ENCODE measurements at regions of chr2 and their contacts with region 1.

Region 1: GRCh38 chr2:9984217-9984739 is 32.8 kb downstream of the GRHL1 start:
- DNase-seq: peak; percentile 78
- ATAC-seq: peak; percentile 43; the same call in 1 of the 2 replicates
- H3K4me3 ChIP-seq: no peak overlapping the region
- H3K27ac ChIP-seq: no peak overlapping the region
- H3K4me1 ChIP-seq: 0 out of 2 replicates have a peak, but pooled peaks cover 3% of the 10 kb centered on the region
- H3K27me3 ChIP-seq: no peaks in the 10 kb centered on the region
- CTCF ChIP-seq: peak; percentile 79

Region 2: DNA sequence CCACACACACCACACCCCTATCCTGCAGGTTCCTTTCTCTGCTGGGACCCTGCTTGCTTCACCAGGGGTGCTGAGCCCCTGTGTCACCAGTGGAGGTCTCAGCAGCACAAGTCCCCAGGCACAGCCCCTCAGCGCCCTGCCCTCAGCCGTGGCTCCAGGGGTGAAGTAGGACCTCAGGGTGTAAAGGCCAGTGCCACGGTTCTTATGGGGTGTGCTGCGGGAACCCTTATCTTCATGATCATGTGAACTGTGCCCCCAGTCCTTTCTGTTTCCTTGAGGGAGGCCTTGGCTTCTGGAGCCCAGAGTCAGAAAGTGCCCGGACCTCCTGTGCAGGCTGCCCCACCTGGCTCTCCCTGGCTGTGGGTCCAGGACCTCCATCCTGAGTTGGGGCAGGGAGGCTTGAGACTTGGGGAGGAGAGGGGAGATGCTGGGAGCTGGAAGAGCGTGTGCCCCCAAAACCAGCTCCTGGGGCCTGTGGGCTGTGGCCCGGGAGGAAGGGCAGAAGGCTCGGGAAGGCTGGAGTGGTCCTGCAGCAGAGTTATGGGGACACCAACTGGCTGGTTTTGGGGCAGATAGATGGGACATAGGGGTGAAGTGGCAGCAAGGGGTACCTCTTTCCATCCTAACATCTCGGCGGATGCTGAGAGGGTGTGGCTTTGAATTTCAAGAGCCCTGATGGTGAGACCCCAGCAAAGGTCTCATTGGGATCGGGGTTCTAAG is 38.8 kb after region 1 on chr2:
- CTCF ChIA-PET with region 1: interaction called, 11 read pairs
- POLR2A ChIA-PET with region 1: no interaction called
- intact Hi-C with region 1: loop called (anchors 2 kb)
- DNase-seq: no peak
- ATAC-seq: peak; percentile 40; the same call in 1 of the 2 replicates
- H3K4me3 ChIP-seq: no peak overlapping the region
- H3K27ac ChIP-seq: no peak overlapping the region
- H3K4me1 ChIP-seq: no peaks in the 10 kb centered on the region
- H3K27me3 ChIP-seq: no peaks in the 10 kb centered on the region
- CTCF ChIP-seq: no peak

Region 3: DNA sequence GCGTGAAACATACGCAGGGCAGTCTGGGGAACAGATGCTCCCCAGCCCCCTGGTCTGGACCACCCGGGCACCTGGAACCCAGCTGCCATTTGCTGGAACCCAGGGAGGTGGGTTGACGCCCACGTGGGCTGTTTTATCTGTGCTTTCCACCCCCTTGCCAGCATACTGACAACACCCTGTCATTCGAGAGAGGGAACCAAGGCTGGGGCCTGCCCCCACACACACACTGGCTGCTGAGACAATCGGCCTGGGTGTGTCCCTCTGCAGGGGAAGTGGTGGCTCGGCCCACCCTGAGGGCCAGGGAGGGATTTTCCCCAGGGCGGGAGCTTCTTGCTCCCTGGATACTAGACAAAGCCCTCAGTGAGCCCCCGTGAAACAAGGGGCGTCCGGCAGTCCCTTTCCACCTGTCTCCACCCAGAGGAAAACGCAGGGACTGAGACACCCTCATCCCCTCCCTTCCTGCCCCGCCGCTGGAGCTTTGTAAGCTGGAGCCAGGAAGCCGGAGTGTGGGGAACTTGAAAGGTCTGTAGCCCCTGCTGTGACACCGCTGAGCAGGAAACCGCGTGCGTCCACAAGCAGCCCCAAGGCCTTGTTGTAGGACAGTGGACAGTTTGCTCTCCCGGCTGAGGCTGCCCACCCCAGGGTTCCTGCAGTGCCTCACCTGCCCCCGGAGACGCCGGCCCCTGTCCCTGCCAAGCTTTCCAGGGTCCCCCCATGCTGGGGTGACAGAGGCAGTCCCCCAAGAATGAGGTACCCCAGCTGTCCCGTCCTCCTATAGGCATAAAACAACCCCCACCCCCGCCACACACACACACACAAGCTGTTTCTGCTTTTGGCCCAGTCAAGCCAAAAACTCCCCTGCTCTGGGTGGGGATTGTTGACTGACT is 45.0 kb after region 1 on chr2:
- CTCF ChIA-PET with region 1: interaction called, 6 read pairs
- POLR2A ChIA-PET with region 1: no interaction called
- intact Hi-C with region 1: loop called (anchors 2 kb)
- DNase-seq: no peak
- ATAC-seq: no peak; the same call in 1 of the 2 replicates
- H3K4me3 ChIP-seq: no peak overlapping the region
- H3K27ac ChIP-seq: no peak overlapping the region
- H3K4me1 ChIP-seq: no peaks in the 10 kb centered on the region
- H3K27me3 ChIP-seq: no peaks in the 10 kb centered on the region
- CTCF ChIP-seq: no peak

Region 4: GRCh38 chr2:10048501-10049171 is 64.4 kb after region 1 on chr2:
- CTCF ChIA-PET with region 1: interaction called, 5 read pairs
- POLR2A ChIA-PET with region 1: no interaction called
- intact Hi-C with region 1: loop called (anchors 1 kb)
- DNase-seq: peak; percentile 55
- ATAC-seq: no peak
- H3K4me3 ChIP-seq: no peak overlapping the region
- H3K27ac ChIP-seq: no peak overlapping the region
- H3K4me1 ChIP-seq: peaks cover 5% of the 10 kb centered on the region
- H3K27me3 ChIP-seq: no peaks in the 10 kb centered on the region
- CTCF ChIP-seq: peak; percentile 80

Region 5: GRCh38 chr2:10135296-10136089 is 151.2 kb after region 1 on chr2:
- CTCF ChIA-PET with region 1: no interaction called
- POLR2A ChIA-PET with region 1: no interaction called
- intact Hi-C with region 1: no loop called
- DNase-seq: peak; percentile 41
- ATAC-seq: peak; percentile 23; the same call in 1 of the 2 replicates
- H3K4me3 ChIP-seq: no peak overlapping the region
- H3K27ac ChIP-seq: no peak overlapping the region
- H3K4me1 ChIP-seq: peaks cover 4% of the 10 kb centered on the region; the same call in 1 of the 2 replicates
- H3K27me3 ChIP-seq: no peaks in the 10 kb centered on the region
- CTCF ChIP-seq: no peak